Activated B cell treated with CpG ODN at 0.5 μM for 24 hours (primary cell): ENCODE measurements at regions of chr16 and their contacts with region 1.

Region 1: GRCh38 chr16:660459-661183 is 7.3 kb upstream of the RHOT2 start:
- DNase-seq: peak; percentile 61
- ATAC-seq: peak; percentile 91
- H3K4me3 Mint-ChIP-seq: peak overlapping the region; percentile 55
- H3K27ac Mint-ChIP-seq: no peak overlapping the region
- H3K4me1 Mint-ChIP-seq: peaks cover 7% of the 10 kb centered on the region
- H3K27me3 Mint-ChIP-seq: no peaks in the 10 kb centered on the region
- CTCF ChIP-seq: no peak

Region 2: DNA sequence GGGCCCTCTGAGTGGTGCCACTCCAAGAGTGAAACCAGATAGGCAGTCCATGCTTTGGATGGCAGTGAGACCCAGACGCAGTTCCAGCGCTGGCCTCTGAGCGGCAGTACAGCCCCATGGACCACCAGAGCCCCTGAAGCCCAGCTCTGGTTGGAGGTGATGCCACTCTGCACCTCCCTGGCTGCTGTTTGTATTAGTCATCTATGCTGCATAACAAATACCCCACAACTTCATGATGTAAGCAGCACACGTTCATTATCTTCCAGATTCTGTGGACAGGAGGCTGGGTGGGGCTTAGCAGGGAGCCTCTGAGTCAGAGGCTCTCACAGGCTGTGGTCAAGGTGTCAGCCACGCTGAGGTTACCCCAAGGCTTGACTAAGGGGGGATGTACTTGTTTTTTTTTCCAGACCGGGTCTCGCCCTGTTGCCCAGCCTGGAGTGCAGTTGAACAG is 268.7 kb before region 1 on chr16:
- CTCF ChIA-PET with region 1: no interaction called
- POLR2A ChIA-PET with region 1: no interaction called
- intact Hi-C with region 1: loop called (anchors 2 kb)
- DNase-seq: peak; percentile 64
- ATAC-seq: peak; percentile 91
- H3K4me3 Mint-ChIP-seq: no peak overlapping the region
- H3K27ac Mint-ChIP-seq: peak overlapping the region; percentile 41
- H3K4me1 Mint-ChIP-seq: peaks cover 16% of the 10 kb centered on the region
- H3K27me3 Mint-ChIP-seq: no peaks in the 10 kb centered on the region
- CTCF ChIP-seq: no peak

Region 3: DNA sequence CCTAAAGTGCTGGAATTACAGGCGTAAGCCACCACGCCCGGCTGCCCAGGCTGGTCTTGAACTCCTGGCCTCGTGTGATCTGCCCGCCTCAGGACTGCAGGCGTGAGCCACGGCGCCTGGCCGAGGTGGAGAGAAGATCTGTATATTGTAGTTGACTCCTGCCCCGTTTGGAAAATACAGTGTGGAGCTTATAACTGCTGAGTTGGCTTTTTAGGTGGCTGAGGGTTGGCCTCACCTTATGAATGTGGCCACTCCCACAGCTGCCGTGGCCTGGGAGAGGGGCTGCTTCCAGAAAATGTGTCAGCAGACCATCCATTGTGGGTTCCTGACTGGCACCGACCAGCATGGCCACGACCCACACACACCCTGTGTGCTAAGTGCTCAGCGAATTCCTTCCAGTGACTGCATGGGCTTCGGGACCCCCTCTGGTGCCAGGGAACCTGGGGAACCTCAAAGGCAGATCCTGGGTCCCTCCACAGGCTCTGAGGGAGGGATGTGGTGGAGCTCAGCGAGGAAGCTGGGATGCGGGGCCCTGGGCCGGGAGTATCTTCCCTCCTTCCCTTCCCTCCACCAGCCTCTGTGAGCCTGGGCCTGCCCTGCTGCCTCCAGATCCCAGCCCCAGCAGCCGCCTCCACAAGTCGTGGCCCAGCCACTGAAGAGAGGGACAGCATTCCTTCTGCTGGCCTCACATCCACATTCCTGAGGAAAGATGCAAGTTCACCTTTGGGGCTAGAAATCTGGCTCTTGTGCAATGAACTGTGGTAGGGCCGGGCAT is 246.0 kb before region 1 on chr16:
- CTCF ChIA-PET with region 1: no interaction called
- POLR2A ChIA-PET with region 1: no interaction called
- intact Hi-C with region 1: no loop called
- DNase-seq: no peak
- ATAC-seq: no peak
- H3K4me3 Mint-ChIP-seq: no peak overlapping the region
- H3K27ac Mint-ChIP-seq: no peak overlapping the region
- H3K4me1 Mint-ChIP-seq: no peaks in the 10 kb centered on the region
- H3K27me3 Mint-ChIP-seq: no peaks in the 10 kb centered on the region
- CTCF ChIP-seq: no peak

Region 4: DNA sequence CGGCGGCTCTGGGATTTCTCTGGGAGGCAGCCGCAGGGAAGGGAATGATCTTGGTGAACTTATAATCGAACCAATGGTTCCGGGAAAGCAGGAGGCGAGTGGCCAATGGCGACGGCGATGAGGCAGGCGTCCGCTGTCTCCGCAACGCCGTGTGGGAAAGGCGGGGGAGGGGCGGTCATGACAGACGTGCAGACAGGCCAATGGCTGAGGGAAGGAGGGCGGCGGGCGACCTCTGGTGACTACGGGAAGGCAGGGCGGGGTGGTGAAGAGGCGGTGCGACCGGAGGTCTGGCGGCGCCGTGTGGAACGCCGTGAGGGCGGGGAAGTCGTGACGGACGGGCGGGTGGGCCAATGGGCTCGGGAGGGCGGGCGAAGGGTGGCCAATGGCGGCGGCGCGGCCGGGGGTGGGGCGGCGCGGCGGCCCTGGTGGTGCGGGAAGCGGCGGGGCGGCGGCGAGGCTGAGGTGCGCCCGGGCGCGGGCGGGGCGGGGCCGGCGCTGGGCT is 70.9 kb before region 1 on chr16 and contains the start of gene RAB40C:
- CTCF ChIA-PET with region 1: no interaction called
- POLR2A ChIA-PET with region 1: interaction called, 5 read pairs
- intact Hi-C with region 1: loop called (anchors 2 kb)
- DNase-seq: peak; percentile 96
- ATAC-seq: peak; percentile 86
- H3K4me3 Mint-ChIP-seq: peak within 1 kb of the TSS; percentile 99
- H3K27ac Mint-ChIP-seq: peak within 1 kb of the TSS; percentile 100
- H3K4me1 Mint-ChIP-seq: peaks cover 42% of the 10 kb centered on the region
- H3K27me3 Mint-ChIP-seq: no peaks in the 10 kb centered on the region
- CTCF ChIP-seq: no peak
- total RNA-seq, gene RAB40C: 10.5 and 13.1 TPM in 2 replicates

Region 5: DNA sequence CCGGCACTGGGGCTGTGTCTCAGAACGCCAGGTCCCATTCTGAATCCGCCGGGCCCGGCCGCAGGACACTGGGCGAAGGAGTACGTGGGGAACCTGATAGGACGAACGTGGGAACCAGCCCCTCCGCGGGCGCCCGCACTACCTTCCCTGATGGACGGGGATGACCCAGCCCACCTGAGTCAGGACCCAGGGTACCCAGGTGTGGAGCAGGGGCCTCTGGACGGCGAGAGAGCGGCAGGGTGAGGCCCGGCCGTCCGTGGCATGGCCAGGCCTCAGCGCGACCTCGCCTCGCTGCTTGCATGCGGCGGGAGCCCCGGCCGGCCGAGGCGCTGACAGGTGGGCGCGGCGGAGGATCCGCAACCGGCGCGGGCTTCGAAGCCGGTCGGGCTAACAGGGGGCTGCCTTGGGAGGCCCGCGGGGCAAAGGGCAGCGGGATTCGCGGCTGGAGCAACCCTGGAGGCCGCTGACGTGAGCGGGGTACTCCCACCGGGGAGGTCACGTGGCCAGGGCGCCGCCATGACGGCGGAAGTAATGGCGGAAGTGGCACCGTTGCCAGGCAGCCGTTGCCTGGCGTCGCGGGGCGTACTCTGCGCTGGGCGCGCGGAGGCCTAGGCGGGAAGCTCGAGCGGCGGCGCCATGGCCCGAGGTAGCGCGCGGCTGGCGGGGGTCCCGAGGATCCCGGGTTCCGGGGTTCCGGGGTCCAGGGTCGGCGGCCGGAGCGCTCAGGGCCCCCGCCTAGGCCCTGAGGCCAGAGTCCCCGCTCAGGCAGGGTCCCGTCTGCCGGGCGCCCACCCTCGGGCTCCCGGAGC is 11.6 kb before region 1 on chr16 and contains the start of gene WDR90:
- CTCF ChIA-PET with region 1: no interaction called
- POLR2A ChIA-PET with region 1: interaction called, 3 read pairs
- intact Hi-C with region 1: loop called (anchors 1 kb)
- DNase-seq: peak; percentile 93
- ATAC-seq: peak; percentile 85
- H3K4me3 Mint-ChIP-seq: peak within 1 kb of the TSS; percentile 84
- H3K27ac Mint-ChIP-seq: peak within 1 kb of the TSS; percentile 85
- H3K4me1 Mint-ChIP-seq: peaks cover 22% of the 10 kb centered on the region
- H3K27me3 Mint-ChIP-seq: no peaks in the 10 kb centered on the region
- CTCF ChIP-seq: no peak
- total RNA-seq, gene WDR90: 24.8 and 33.7 TPM in 2 replicates